ENCODE measurements at regions of chr17 and their contacts with region 1.

Region 1: GRCh38 chr17:50297407-50297865 is 23.2 kb downstream of the TMEM92 start:
- DNase-seq: peak; percentile 74
- H3K4me3 ChIP-seq: no peak overlapping the region
- H3K27ac ChIP-seq: no peak overlapping the region
- H3K4me1 ChIP-seq: no peaks in the 10 kb centered on the region
- CTCF ChIP-seq: peak; percentile 81

Region 2: DNA sequence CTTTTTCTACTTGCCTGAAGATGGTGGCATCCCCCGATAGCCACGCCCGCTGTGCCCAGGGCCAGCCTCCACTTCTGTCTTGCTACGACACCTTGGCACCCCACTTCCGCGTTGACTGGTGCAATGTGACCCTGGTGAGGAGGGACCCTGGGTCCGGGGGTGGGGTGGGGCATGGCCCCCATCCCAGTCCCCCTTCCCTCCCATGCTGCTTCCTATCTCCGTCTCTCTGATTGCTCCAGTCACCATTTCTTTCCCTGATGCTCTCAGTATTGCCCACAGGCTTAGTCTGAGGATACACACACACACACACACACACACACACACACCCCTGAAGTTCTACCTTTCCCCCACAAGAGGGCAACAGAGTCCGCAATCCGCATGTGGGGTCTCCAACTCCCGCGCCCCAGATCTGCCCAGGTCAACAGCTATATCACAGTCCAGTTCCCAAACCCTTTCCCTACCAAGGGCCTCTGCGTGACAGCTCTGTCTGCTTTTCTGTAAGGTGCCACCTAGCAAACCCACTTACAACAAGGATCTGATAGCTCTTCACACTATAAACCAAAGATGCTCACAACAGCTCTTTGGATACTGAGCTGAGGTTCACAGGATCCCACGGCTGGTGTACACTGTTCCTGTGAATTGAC is 128.2 kb before region 1 on chr17:
- CTCF ChIA-PET with region 1: no interaction called
- POLR2A ChIA-PET with region 1: no interaction called
- intact Hi-C with region 1: loop called (anchors 1 kb)
- DNase-seq: peak; percentile 84
- H3K4me3 ChIP-seq: peak overlapping the region; percentile 64
- H3K27ac ChIP-seq: no peak overlapping the region
- H3K4me1 ChIP-seq: peaks cover 17% of the 10 kb centered on the region
- CTCF ChIP-seq: peak; percentile 92

Region 3: GRCh38 chr17:50200457-50201275 is 96.8 kb before region 1 on chr17:
- CTCF ChIA-PET with region 1: interaction called, 3 read pairs
- POLR2A ChIA-PET with region 1: no interaction called
- intact Hi-C with region 1: loop called (anchors 1 kb)
- DNase-seq: peak; percentile 85
- H3K4me3 ChIP-seq: peak overlapping the region; percentile 55
- H3K27ac ChIP-seq: no peak overlapping the region
- H3K4me1 ChIP-seq: peaks cover 8% of the 10 kb centered on the region
- CTCF ChIP-seq: peak; percentile 100

Region 4: DNA sequence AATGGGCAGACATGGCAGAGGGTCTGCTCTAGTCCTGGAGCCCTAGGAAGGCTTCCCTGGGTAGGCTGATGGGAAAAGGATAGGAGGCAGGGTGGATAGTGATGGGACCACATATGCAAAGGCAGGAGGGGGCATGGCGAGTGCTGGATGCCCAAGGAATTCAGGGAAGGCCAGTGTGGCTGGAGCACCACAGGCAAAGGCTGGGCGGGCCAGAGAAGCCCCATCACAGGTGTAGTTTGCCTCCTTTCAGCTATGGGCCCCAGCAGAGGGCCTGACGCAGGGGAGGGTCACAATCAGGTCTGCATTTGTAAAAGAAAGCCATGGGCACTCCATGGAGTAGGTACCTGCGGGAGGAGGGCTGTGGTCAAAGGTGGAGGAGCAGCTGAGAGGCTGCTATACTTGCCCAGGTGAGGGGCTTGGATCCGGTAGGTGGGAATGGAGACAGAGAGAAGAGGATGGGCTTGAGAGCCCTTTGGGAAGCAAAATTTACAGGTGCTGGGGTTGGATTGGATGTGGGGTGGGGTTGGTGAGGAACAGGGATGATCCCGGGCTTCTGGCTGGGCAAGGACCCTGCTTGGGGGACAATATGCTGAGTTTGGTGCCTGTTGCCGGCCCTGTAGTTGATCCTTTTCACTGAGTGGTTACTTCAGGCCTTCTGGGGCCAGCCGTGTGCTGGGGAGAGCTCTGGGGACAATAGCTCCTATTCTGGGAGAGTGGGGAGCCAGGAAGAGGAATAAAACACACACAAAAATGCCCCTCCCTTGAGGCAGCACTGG is 89.5 kb before region 1 on chr17:
- CTCF ChIA-PET with region 1: interaction called, 10 read pairs
- POLR2A ChIA-PET with region 1: no interaction called
- intact Hi-C with region 1: no loop called
- DNase-seq: no peak
- H3K4me3 ChIP-seq: no peak overlapping the region
- H3K27ac ChIP-seq: no peak overlapping the region
- H3K4me1 ChIP-seq: no peaks in the 10 kb centered on the region
- CTCF ChIP-seq: no peak

Region 5: GRCh38 chr17:50248255-50248654 is 49.2 kb before region 1 on chr17:
- CTCF ChIA-PET with region 1: no interaction called
- POLR2A ChIA-PET with region 1: no interaction called
- intact Hi-C with region 1: no loop called
- DNase-seq: no peak
- H3K4me3 ChIP-seq: no peak overlapping the region
- H3K27ac ChIP-seq: no peak overlapping the region
- H3K4me1 ChIP-seq: no peaks in the 10 kb centered on the region
- CTCF ChIP-seq: no peak

Region 6: DNA sequence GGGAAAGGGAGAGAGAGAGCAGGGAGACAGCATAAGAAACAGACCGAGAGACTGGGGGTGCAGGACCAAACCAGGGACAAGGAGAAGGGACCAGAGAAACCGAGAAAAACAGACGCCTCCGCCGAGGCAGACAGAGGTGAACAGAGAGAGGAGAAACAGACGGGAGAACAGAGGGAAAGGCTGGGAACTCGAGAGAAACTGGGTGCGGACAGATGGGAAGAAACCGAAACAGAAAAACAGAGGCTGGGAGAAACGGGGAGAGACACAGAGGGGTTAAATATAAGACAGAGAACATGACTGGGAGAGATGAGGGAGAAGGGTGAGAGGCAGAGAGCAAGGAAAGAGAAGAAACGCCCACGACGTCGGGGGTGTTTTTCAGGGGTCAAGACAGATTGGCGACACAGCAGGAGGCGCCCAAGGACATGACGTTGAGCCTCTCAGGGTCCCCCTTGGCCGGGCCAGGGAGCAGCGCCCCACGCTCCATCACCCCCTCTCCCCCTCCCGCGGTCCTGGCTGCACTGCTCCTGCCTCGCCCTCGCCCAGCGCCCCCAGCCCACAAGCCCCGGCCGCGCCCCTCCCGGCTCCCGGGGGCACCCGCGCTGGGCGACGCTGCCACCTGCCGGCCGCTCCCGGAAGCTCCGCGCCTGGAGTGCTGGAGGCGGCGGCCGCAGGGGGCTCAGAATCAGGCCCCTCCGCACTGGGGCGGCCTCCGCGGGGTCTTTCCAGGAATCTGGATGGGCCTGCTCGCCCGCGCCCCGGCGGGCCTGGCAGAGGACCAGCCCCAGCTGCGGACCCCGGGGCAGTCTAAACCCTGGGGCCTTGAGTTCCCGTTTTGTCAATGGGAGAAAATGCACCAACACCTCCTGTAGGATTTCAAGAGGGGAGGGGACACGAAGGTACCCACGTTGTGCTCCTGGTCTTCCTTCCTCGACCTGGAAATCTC is 24.5 kb before region 1 on chr17:
- CTCF ChIA-PET with region 1: no interaction called
- POLR2A ChIA-PET with region 1: no interaction called
- intact Hi-C with region 1: loop called (anchors 1 kb)
- DNase-seq: peak; percentile 48
- H3K4me3 ChIP-seq: peak overlapping the region; percentile 41
- H3K27ac ChIP-seq: no peak overlapping the region
- H3K4me1 ChIP-seq: no peaks in the 10 kb centered on the region
- CTCF ChIP-seq: peak; percentile 90